ENCODE measurements at regions of chr2 and their contacts with region 1.

Region 1: DNA sequence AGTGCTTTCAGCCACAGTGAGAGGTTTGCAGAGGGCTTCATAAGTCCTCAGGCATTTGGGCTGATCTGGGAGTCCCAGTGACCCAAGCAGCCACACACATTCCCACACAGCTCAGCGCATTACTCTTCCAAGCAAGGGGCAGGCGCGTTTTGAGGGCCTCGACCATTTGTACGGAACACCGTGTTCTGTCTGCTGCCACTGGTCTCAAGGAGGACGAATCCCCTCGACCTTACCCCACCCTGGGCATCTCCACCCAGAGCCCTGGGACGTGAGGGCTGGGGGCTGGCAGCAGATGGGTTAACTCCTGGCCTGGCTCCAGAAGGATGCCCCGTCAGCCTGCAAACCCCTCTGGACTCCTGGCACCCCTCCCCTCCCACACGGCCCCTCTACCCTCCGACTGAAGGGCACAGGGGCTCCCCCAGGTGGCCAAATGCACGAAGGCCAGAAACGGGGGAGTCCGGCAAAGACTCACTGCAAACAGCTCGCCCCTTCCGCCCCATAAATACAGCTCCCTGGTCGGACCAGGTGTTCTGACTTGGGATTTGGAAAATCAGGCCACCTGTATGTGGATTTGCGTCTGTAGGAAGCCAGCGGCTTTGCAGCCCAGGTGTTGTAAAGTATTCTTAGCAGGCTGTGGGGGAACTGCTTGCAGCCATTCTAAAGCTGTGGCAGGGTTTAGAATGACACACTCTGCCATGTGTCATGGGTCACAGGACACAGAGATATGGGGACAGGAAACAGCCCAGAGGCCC is 33.6 kb upstream of the PTMA start:
- DNase-seq: peak; percentile 15 to 64 (median 32)
- H3K4me3 ChIP-seq: no peak overlapping the region
- H3K4me3 Mint-ChIP-seq: no peak overlapping the region
- H3K27ac ChIP-seq: no peak overlapping the region
- H3K27ac Mint-ChIP-seq: peak overlapping the region in 2 of 8 donors; percentile 29 to 60
- H3K4me1 ChIP-seq: peaks cover 7% of the 10 kb centered on the region
- H3K4me1 Mint-ChIP-seq: peaks cover 2 to 8% (median 5%) of the 10 kb centered on the region in 3 donors
- H3K27me3 ChIP-seq: no peaks in the 10 kb centered on the region
- H3K27me3 Mint-ChIP-seq: peaks cover 0 to 4% of the 10 kb centered on the region in 2 donors

Region 2: GRCh38 chr2:231612179-231613053 is 62.3 kb before region 1 on chr2:
- CTCF ChIA-PET with region 1: interaction called, 180 read pairs
- POLR2A ChIA-PET with region 1: no interaction called
- DNase-seq: peak; percentile 79 to 92 (median 81)
- H3K4me3 ChIP-seq: peak overlapping the region; percentile 62
- H3K4me3 Mint-ChIP-seq: peak overlapping the region; percentile 54 to 90 (median 81)
- H3K27ac ChIP-seq: no peak overlapping the region
- H3K27ac Mint-ChIP-seq: peak overlapping the region; percentile 63 to 100 (median 90)
- H3K4me1 ChIP-seq: peaks cover 19% of the 10 kb centered on the region
- H3K4me1 Mint-ChIP-seq: peaks cover 16 to 40% (median 19%) of the 10 kb centered on the region in 3 donors
- H3K27me3 ChIP-seq: no peaks in the 10 kb centered on the region
- H3K27me3 Mint-ChIP-seq: peaks cover 0 to 2% of the 10 kb centered on the region in 2 donors

Region 3: DNA sequence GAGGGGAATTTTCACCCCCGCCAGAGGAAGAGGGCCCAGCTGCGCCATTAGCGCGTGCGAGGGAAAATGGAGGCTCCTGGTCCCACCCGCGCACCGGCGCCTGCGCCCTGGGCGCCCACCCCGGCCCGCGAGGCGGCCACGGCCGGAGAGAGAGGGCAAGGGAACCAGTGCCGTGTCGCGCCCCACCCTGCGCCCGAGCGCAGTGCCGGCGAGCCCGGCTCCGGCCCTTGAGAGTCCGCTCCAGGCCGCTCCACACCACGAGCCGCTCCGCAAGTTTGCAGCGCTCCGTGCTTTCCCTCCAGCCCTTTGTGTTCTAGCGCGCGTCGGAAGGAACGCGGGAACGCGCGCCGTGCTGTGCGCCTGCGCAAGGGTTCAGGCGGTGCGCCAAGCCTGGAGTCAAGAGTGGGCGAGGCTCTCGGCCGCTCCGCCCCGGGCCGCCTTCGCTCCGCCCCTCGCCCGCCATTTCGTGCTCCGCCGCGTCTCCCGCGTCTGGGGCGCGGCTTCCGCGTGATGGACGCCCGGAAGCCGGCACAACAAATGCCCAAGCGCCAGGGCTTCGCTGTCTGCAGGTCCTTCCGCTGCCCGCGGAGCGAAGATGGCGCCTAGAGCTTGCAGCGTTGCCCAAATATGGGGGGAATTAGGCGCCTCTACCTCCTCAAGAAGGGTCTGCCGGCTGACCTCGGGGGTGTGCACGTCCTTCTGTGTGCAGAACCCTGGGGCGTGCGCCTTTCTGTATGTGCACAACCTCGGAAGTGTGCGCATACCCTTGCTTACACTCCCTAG is 12.5 kb before region 1 on chr2:
- CTCF ChIA-PET with region 1: interaction called, 84 read pairs
- POLR2A ChIA-PET with region 1: interaction called, 5 read pairs
- DNase-seq: peak; percentile 94 to 99 (median 97)
- H3K4me3 ChIP-seq: peak overlapping the region; percentile 69
- H3K4me3 Mint-ChIP-seq: peak overlapping the region; percentile 74 to 88 (median 81)
- H3K27ac ChIP-seq: peak overlapping the region; percentile 83
- H3K27ac Mint-ChIP-seq: peak overlapping the region; percentile 92 to 97 (median 96)
- H3K4me1 ChIP-seq: peaks cover 11% of the 10 kb centered on the region
- H3K4me1 Mint-ChIP-seq: peaks cover 7 to 15% (median 12%) of the 10 kb centered on the region in 3 donors
- H3K27me3 ChIP-seq: no peaks in the 10 kb centered on the region
- H3K27me3 Mint-ChIP-seq: peaks cover 0 to 3% of the 10 kb centered on the region in 2 donors

Region 4: GRCh38 chr2:231701456-231702373 is 27.0 kb after region 1 on chr2:
- CTCF ChIA-PET with region 1: interaction called, 88 read pairs
- POLR2A ChIA-PET with region 1: interaction called, 11 read pairs
- DNase-seq: no peak
- H3K4me3 ChIP-seq: no peak overlapping the region
- H3K4me3 Mint-ChIP-seq: no peak overlapping the region
- H3K27ac ChIP-seq: no peak overlapping the region
- H3K27ac Mint-ChIP-seq: peak overlapping the region in 3 of 8 donors; percentile 47 to 60 (median 57)
- H3K4me1 ChIP-seq: peaks cover 13% of the 10 kb centered on the region
- H3K4me1 Mint-ChIP-seq: peaks cover 11 to 21% (median 12%) of the 10 kb centered on the region in 3 donors
- H3K27me3 ChIP-seq: no peaks in the 10 kb centered on the region
- H3K27me3 Mint-ChIP-seq: peaks cover 0 to 1% of the 10 kb centered on the region in 2 donors

Region 5: DNA sequence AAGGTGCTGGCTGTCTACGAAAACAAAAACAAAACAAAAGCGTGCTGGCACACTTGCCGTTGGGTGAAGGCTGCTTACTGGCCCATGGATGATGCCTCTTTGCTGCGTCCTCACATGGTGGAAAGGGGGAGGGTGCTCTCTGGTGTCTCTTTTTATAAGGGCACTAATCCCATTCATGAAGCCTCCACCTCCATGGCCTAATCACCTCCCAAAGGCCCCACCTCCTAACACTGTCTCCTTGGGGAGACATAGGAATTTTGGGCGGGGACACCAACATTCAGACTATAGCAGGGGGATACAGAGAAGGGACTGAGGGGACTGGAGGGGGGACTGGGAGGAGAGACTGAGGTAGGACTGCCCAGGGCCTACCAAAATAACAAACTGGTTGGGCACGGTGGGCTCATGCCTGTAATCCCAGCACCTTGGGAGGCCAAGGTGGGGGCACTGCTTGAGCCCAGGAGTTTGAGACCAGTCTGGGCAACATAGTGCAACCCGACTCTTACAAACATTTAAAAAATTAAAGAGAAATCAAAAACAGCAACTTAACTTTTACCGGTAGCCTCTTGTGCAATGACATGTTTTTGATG is 48.1 kb after region 1 on chr2:
- CTCF ChIA-PET with region 1: interaction called, 357 read pairs
- POLR2A ChIA-PET with region 1: interaction called, 5 read pairs
- DNase-seq: no peak
- H3K4me3 ChIP-seq: no peak overlapping the region
- H3K4me3 Mint-ChIP-seq: no peak overlapping the region
- H3K27ac ChIP-seq: no peak overlapping the region
- H3K27ac Mint-ChIP-seq: no peak overlapping the region
- H3K4me1 ChIP-seq: no peaks in the 10 kb centered on the region
- H3K4me1 Mint-ChIP-seq: no peaks in the 10 kb centered on the region
- H3K27me3 ChIP-seq: no peaks in the 10 kb centered on the region
- H3K27me3 Mint-ChIP-seq: peaks cover 0 to 2% of the 10 kb centered on the region in 2 donors

Region 6: GRCh38 chr2:231743376-231744116 is 68.8 kb after region 1 on chr2:
- CTCF ChIA-PET with region 1: no interaction called
- POLR2A ChIA-PET with region 1: no interaction called
- DNase-seq: no peak
- H3K4me3 ChIP-seq: no peak overlapping the region
- H3K4me3 Mint-ChIP-seq: no peak overlapping the region
- H3K27ac ChIP-seq: no peak overlapping the region
- H3K27ac Mint-ChIP-seq: peak overlapping the region in 1 of 8 donors; percentile 59
- H3K4me1 ChIP-seq: no peaks in the 10 kb centered on the region
- H3K4me1 Mint-ChIP-seq: no peaks in the 10 kb centered on the region
- H3K27me3 ChIP-seq: no peaks in the 10 kb centered on the region
- H3K27me3 Mint-ChIP-seq: peaks cover 0 to 1% of the 10 kb centered on the region in 2 donors

Region 7: GRCh38 chr2:231877533-231878456 is 203.0 kb after region 1 on chr2:
- CTCF ChIA-PET with region 1: no interaction called
- POLR2A ChIA-PET with region 1: no interaction called
- DNase-seq: no peak
- H3K4me3 ChIP-seq: no peak overlapping the region
- H3K4me3 Mint-ChIP-seq: no peak overlapping the region
- H3K27ac ChIP-seq: no peak overlapping the region
- H3K27ac Mint-ChIP-seq: no peak overlapping the region
- H3K4me1 ChIP-seq: no peaks in the 10 kb centered on the region
- H3K4me1 Mint-ChIP-seq: no peaks in the 10 kb centered on the region
- H3K27me3 ChIP-seq: no peaks in the 10 kb centered on the region
- H3K27me3 Mint-ChIP-seq: peaks cover 13 to 46% of the 10 kb centered on the region in 2 donors

Measured in CD8-positive, alpha-beta memory T cell (primary cell).